ENCODE measurements at regions of chr20 and their contacts with region 1.

Region 1: GRCh38 chr20:31560094-31560899 is 44.8 kb upstream of the ID1 start:
- DNase-seq: peak; percentile 75
- ATAC-seq: peak; percentile 65
- H3K4me3 ChIP-seq: no peak overlapping the region
- H3K4me3 Mint-ChIP-seq: no peak overlapping the region
- H3K27ac ChIP-seq: no peak overlapping the region
- H3K27ac Mint-ChIP-seq: no peak overlapping the region
- H3K4me1 ChIP-seq: no peaks in the 10 kb centered on the region
- H3K4me1 Mint-ChIP-seq: no peaks in the 10 kb centered on the region
- H3K27me3 ChIP-seq: no peaks in the 10 kb centered on the region
- H3K27me3 Mint-ChIP-seq: no peaks in the 10 kb centered on the region
- CTCF ChIP-seq: peak; percentile 89

Region 2: GRCh38 chr20:30593572-30593971 is 966.7 kb before region 1 on chr20:
- CTCF ChIA-PET with region 1: no interaction called
- POLR2A ChIA-PET with region 1: no interaction called
- intact Hi-C with region 1: no loop called
- DNase-seq: no peak
- ATAC-seq: no peak
- H3K4me3 ChIP-seq: no peak overlapping the region
- H3K4me3 Mint-ChIP-seq: no peak overlapping the region
- H3K27ac ChIP-seq: no peak overlapping the region
- H3K27ac Mint-ChIP-seq: no peak overlapping the region
- H3K4me1 ChIP-seq: no peaks in the 10 kb centered on the region
- H3K4me1 Mint-ChIP-seq: no peaks in the 10 kb centered on the region
- H3K27me3 ChIP-seq: no peaks in the 10 kb centered on the region
- H3K27me3 Mint-ChIP-seq: no peaks in the 10 kb centered on the region
- CTCF ChIP-seq: no peak

Region 3: DNA sequence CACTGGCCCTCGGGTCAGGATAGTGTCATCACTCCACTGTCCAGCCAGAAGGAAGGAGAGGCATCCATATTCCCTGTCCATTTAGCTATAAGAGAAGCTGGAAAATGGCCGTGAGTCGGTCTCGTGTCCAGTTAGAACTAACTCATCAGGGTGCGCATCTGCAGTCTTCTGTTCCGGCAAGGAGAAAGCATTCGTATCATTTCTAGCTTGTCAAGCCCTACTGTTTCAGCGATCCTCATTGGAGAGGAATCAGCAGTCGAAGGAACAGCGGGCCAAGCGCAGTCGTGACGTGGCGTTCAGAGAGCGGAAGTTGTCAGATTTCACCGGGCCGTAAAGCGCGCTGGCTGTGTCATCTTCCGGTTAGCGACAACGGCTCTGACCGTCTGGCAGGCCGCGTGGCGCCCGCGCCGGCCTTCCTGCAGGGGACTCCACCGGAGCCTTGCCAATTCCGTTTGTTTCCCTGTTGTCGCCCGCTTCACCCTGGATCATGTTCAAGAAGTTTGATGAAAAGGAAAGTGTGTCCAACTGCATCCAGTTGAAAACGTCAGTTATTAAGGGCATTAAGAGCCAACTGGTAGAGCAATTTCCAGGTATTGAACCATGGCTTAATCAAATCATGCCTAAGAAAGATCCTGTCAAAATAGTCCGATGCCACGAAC is 13.2 kb before region 1 on chr20:
- CTCF ChIA-PET with region 1: interaction called, 51 read pairs
- POLR2A ChIA-PET with region 1: no interaction called
- intact Hi-C with region 1: no loop called
- DNase-seq: peak; percentile 88
- ATAC-seq: peak; percentile 82
- H3K4me3 ChIP-seq: peak overlapping the region; percentile 48 to 81 (median 65)
- H3K4me3 Mint-ChIP-seq: peak overlapping the region; percentile 97
- H3K27ac ChIP-seq: peak overlapping the region; percentile 56 to 85
- H3K27ac Mint-ChIP-seq: peak overlapping the region; percentile 98
- H3K4me1 ChIP-seq: peaks cover 8 to 9% of the 10 kb centered on the region in 2 donors
- H3K4me1 Mint-ChIP-seq: peaks cover 19% of the 10 kb centered on the region
- H3K27me3 ChIP-seq: no peaks in the 10 kb centered on the region
- H3K27me3 Mint-ChIP-seq: no peaks in the 10 kb centered on the region
- CTCF ChIP-seq: no peak

Region 4: DNA sequence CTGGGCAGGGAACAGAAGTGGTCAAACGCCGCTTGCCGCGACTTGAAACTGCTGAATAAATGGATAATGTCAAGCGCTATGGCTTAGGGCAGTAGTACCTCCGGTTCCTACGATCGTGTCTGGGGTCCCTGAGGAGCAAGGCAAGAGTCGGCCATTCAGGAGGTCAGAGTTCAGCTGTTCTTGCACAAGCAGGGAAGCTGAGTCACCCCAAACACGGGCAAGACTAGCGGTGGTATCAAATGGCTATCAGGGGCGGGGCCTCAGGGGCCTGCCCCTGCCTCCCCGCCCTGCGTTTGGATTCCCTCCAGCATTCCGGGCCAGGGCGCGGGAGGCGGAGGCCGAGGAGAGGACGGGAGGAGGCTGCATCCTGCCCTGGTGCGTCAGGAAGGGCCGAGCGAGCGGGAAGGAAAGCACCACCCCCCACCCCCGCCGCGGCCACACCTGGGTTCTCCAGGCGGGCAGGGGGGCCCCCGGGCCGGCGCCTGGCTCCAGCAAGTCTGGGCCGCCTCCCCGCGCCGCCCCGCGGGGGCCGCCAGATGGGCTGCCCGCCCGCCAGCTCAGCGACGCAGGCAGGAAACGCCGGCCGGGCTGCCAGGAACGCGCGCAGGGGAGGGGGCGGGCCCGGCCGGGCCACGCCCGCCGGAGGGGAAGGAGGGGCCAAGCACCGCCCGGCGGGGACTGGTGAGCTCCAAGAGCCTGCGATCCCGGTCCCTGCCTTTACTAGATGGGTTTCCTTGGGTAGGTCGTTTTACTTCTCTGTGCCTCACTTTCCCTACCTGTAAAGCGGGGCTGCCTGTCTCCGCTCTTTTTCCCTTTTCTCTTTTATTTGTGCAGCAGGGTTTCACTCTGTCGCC is 12.6 kb after region 1 on chr20:
- CTCF ChIA-PET with region 1: interaction called, 62 read pairs
- POLR2A ChIA-PET with region 1: no interaction called
- intact Hi-C with region 1: no loop called
- DNase-seq: peak; percentile 90
- ATAC-seq: peak; percentile 94
- H3K4me3 ChIP-seq: peak overlapping the region; percentile 51 to 83 (median 71)
- H3K4me3 Mint-ChIP-seq: peak overlapping the region; percentile 92
- H3K27ac ChIP-seq: peak overlapping the region; percentile 49 to 76
- H3K27ac Mint-ChIP-seq: peak overlapping the region; percentile 80
- H3K4me1 ChIP-seq: peaks cover 10 to 18% of the 10 kb centered on the region in 2 donors
- H3K4me1 Mint-ChIP-seq: peaks cover 19% of the 10 kb centered on the region
- H3K27me3 ChIP-seq: no peaks in the 10 kb centered on the region
- H3K27me3 Mint-ChIP-seq: no peaks in the 10 kb centered on the region
- CTCF ChIP-seq: no peak

Region 5: DNA sequence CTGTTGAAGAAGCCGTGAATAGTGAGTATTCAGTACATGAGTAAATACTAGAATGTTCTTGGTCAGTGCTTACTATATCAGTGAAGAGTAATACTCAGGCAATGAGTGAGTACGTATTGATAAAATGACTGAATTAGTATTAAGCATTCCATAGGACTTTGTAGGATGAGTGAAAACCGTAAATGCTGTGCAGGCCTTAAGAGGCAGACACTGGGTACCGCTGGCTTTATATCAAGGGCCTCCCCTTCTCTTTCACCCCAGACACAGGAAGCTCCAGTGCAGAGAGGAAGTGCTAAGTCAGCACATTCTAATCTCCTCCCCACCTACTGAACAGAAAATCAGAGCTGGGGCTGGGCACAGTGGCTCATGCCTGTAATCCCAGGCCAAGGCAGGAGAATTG is 671.5 kb after region 1 on chr20:
- CTCF ChIA-PET with region 1: no interaction called
- POLR2A ChIA-PET with region 1: no interaction called
- intact Hi-C with region 1: no loop called
- DNase-seq: peak; percentile 22
- ATAC-seq: peak; percentile 58
- H3K4me3 ChIP-seq: no peak overlapping the region
- H3K4me3 Mint-ChIP-seq: no peak overlapping the region
- H3K27ac ChIP-seq: peak overlapping the region in 1 of 2 donors; percentile 54
- H3K27ac Mint-ChIP-seq: peak overlapping the region; percentile 77
- H3K4me1 ChIP-seq: peaks cover 4 to 16% of the 10 kb centered on the region in 2 donors
- H3K4me1 Mint-ChIP-seq: peaks cover 10% of the 10 kb centered on the region
- H3K27me3 ChIP-seq: no peaks in the 10 kb centered on the region
- H3K27me3 Mint-ChIP-seq: no peaks in the 10 kb centered on the region
- CTCF ChIP-seq: no peak